GM10248 (cell line): ENCODE measurements at regions of chr2 and their contacts with region 1.

Region 1: DNA sequence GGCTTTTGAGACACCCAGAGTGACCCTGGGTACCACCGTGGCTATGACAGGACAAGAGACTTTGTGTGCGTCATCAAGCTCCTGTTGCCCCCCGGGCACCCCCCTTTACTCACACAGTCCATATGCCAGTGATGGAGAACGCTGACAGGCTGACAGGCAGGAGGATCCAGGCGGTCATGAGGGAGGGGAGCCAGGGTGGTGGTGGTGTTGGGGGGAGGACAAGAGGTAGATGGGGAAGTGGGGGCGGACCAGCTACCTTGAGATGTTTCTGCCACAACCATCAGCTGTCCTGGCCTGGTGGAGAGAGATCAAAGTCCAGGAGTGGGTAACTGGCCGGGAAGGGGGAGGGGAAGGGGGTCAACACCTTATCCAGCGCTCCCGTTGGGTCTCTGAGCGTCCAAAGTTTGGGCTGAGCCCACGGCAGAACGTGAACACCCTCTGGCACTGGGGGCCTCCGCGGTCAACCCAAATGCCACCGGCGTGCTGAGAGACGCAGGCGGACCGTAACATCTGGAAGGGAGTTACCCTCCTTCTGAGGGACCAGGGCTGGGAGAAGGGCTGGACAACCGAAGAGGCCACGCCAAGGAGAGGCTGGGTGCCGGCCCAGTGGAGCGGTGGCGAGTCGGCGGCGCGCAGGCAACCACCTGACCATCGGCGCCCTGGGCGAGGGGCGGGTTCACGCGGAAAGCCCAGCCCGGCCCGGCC is 575 bp downstream of the TMEM150A start:
- DNase-seq: peak; percentile 48
- CTCF ChIP-seq: no peak

Region 2: DNA sequence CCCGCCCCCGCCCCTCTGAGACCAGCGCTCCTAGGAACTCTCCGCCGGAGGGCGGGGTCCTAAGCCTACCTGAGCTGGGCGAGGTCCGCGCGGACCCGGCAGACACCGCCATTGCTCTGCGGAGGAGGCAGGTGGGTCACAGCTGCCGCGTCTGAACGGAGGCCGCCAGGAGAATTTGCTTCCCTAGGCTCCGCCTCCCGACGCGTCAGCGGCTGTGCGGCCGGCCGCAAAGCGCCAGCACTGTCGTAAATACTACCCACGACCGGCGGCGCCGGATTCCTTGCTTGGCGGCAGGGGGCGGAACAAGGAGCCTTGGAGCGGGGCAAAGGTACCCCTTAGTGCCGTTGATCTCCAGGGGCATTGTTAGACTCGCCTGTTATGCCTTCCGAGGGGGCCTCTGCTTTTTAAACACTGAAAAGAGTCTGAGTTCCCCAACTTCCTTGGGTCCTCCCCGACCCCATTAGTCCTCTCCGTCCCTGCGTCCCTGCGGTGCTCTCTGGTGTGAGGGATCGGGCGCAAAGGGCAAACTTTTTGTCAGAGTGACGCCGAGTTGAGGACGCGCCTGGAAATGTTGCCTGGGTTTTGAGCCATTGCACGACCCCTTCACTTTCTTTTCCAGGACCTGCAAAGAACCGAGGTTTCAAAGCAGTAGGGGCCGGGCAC is 40.5 kb before region 1 on chr2 and contains the start of gene GGCX:
- CTCF ChIA-PET with region 1: interaction called, 3 read pairs
- POLR2A ChIA-PET with region 1: interaction called, 10 read pairs
- DNase-seq: peak; percentile 96
- CTCF ChIP-seq: no peak

Region 3: DNA sequence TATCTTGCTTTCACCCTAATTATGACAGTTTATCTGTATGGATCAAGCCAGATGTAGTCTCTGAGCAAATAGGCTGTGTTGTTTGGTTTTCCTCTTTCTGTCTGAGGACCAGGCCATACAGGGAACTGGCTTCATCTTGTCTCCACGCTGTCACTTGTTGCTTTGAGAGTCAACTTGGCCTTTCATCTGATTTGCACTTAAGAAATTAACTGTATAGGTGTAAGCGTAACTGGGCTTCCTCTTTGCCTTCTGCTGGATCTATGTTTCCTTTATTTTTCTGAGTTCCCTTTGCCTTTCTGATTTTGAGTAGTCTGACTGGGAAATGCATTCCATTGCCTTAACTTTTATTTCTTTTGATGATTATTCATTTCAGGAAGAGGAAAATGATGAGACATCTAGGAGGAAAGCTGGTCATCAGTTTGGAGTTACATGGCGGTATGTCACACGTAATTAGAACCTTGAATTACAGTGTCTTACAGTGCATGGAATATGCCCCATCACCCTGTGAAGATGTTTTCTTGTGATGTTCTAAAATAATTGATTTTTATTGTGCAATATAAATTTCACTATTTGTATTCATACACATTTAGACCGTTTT is 521.5 kb after region 1 on chr2:
- CTCF ChIA-PET with region 1: no interaction called
- POLR2A ChIA-PET with region 1: no interaction called
- DNase-seq: no peak
- CTCF ChIP-seq: no peak